AG04449 (cell line): ENCODE measurements at regions of chr19 and their contacts with region 1.

Region 1: DNA sequence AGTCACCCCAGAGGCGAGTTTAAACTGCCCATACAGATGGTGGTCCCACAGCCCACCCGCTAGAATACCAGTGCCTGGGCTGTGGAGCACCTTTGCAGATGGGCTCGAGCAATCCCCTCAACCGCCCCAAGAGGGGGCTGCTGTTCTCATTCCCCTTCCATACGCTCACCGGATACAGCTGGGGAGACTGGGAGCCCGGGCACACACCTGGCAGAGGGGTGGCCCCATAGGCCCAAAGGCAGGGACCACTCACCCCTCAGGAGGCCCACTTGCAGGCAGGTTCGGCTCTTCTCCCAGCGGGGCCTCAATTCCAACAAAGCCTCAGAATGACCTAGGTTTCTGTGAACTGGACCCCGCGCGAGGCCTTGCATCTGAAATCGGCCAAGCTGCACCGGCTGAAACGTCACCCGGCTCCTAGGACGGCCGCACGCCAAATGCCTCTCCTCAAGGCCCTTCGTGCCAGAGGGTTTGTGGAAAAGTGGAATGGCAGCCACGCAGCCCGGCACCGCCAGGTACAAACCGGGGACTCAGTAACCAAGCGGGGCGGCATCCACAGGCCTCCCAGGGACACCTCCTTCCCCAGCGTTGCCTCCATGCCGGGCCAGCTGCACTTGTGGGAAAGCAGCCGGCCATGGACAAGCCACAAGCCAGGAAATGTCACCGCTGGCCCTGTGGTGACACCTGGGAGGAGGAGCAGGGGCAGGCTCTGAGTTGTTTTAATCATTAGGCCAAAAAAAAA is 18.7 kb downstream of the MLLT1 start:
- DNase-seq: no peak
- H3K4me3 ChIP-seq: no peak overlapping the region
- CTCF ChIP-seq: peak; percentile 61

Region 2: GRCh38 chr19:6271721-6272410 is 10.8 kb after region 1 on chr19:
- CTCF ChIA-PET with region 1: interaction called, 22 read pairs
- POLR2A ChIA-PET with region 1: no interaction called
- DNase-seq: no peak
- H3K4me3 ChIP-seq: peak overlapping the region; percentile 23
- CTCF ChIP-seq: peak; percentile 24